ENCODE measurements at regions of chr6 and their contacts with region 1.

Region 1: GRCh38 chr6:30616811-30617564 is at the start of gene PPP1R10:
- DNase-seq: peak; percentile 98 to 100
- ATAC-seq: peak; percentile 96
- H3K4me3 ChIP-seq: peak within 1 kb of the TSS; percentile 97 to 100
- H3K27ac ChIP-seq: peak within 1 kb of the TSS; percentile 91 to 95
- H3K4me1 ChIP-seq: peaks cover 0 to 3% of the 10 kb centered on the region in 2 donors
- H3K27me3 ChIP-seq: peaks cover 0 to 2% of the 10 kb centered on the region in 2 donors
- total RNA-seq, gene PPP1R10: 69.9 to 83.8 TPM

Region 2: GRCh38 chr6:30020626-30021025 is 596.4 kb before region 1 on chr6:
- intact Hi-C with region 1: no loop called
- DNase-seq: no peak
- ATAC-seq: no peak
- H3K4me3 ChIP-seq: no peak overlapping the region
- H3K27ac ChIP-seq: no peak overlapping the region
- H3K4me1 ChIP-seq: no peaks in the 10 kb centered on the region
- H3K27me3 ChIP-seq: no peaks in the 10 kb centered on the region

Region 3: GRCh38 chr6:30544666-30545272 is 72.2 kb before region 1 on chr6:
- intact Hi-C with region 1: no loop called
- DNase-seq: no peak
- ATAC-seq: peak; percentile 77
- H3K4me3 ChIP-seq: no peak overlapping the region
- H3K27ac ChIP-seq: no peak overlapping the region
- H3K4me1 ChIP-seq: no peaks in the 10 kb centered on the region
- H3K27me3 ChIP-seq: no peaks in the 10 kb centered on the region

Region 4: DNA sequence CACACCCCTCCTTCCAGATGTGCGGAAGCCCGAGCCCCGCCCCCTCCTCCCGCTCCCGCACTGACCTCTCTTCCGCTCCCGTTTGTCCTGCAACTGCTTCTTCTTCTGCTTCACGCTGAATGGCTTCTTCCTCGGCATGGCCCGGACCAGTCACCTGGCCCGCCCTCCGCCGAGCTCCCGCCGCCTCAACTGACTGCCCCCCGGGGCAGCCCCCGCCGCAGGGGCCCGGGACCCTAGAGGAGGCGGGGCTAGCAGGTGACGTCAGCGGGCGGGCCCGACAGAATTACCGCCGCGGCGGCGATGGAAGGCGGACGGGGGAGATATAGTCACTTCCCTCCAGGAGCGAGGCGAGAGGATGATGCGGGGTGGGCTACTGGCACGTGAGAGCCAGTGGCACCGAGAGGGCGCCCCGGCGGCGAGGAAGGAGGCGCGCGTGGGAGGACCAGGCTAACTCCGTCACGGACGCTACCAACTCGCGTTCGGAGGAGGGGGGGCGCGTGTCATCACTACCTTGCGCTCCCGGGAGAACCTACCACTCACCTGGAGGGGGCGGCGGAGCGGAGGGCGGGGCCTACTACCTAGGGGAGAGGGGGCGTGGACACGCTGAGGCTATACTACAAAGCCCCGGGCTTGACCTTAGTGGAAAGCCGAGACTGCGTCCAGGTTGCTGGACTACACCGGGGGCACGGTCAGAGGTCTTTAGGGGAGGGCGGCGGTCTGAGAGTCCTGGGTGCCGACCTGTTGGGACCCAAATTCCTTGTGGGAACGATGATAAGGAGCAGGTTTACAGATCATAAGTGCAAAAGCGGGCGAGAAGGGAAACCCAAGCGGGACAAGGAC is 60.7 kb before region 1 on chr6 and contains the start of gene GNL1:
- intact Hi-C with region 1: loop called in 1 of 2 experiments (anchors 5 kb)
- DNase-seq: peak; percentile 96 to 97
- ATAC-seq: peak; percentile 93
- H3K4me3 ChIP-seq: peak within 1 kb of the TSS; percentile 67 to 69
- H3K27ac ChIP-seq: peak within 1 kb of the TSS; percentile 17 to 75
- H3K4me1 ChIP-seq: no peaks in the 10 kb centered on the region
- H3K27me3 ChIP-seq: no peaks in the 10 kb centered on the region
- total RNA-seq, gene GNL1: 73.7 to 76.9 TPM

Region 5: GRCh38 chr6:30571075-30571768 is 45.8 kb before region 1 on chr6 and contains the start of gene ABCF1:
- intact Hi-C with region 1: loop called (anchors 5 kb)
- DNase-seq: peak; percentile 99 to 100
- ATAC-seq: peak; percentile 100
- H3K4me3 ChIP-seq: peak within 1 kb of the TSS; percentile 82 to 93
- H3K27ac ChIP-seq: peak within 1 kb of the TSS in 1 of 2 donors; percentile 97
- H3K4me1 ChIP-seq: no peaks in the 10 kb centered on the region
- H3K27me3 ChIP-seq: no peaks in the 10 kb centered on the region
- total RNA-seq, gene ABCF1: 35.4 to 41.2 TPM

Region 6: GRCh38 chr6:30672445-30673253 is 55.7 kb after region 1 on chr6 and contains the start of gene DHX16:
- intact Hi-C with region 1: loop called in 1 of 2 experiments (anchors 5 kb)
- DNase-seq: peak; percentile 98
- ATAC-seq: peak; percentile 96
- H3K4me3 ChIP-seq: peak within 1 kb of the TSS; percentile 63 to 69
- H3K27ac ChIP-seq: peak within 1 kb of the TSS in 1 of 2 donors; percentile 2
- H3K4me1 ChIP-seq: no peaks in the 10 kb centered on the region
- H3K27me3 ChIP-seq: no peaks in the 10 kb centered on the region
- total RNA-seq, gene DHX16: 22.3 to 25.2 TPM

Region 7: GRCh38 chr6:30686908-30687658 is 70.1 kb after region 1 on chr6:
- intact Hi-C with region 1: loop called in 1 of 2 experiments (anchors 2 kb)
- DNase-seq: peak; percentile 98 to 99
- ATAC-seq: peak; percentile 84
- H3K4me3 ChIP-seq: peak overlapping the region; percentile 72 to 82
- H3K27ac ChIP-seq: peak overlapping the region; percentile 24 to 94
- H3K4me1 ChIP-seq: no peaks in the 10 kb centered on the region
- H3K27me3 ChIP-seq: no peaks in the 10 kb centered on the region

Region 8: DNA sequence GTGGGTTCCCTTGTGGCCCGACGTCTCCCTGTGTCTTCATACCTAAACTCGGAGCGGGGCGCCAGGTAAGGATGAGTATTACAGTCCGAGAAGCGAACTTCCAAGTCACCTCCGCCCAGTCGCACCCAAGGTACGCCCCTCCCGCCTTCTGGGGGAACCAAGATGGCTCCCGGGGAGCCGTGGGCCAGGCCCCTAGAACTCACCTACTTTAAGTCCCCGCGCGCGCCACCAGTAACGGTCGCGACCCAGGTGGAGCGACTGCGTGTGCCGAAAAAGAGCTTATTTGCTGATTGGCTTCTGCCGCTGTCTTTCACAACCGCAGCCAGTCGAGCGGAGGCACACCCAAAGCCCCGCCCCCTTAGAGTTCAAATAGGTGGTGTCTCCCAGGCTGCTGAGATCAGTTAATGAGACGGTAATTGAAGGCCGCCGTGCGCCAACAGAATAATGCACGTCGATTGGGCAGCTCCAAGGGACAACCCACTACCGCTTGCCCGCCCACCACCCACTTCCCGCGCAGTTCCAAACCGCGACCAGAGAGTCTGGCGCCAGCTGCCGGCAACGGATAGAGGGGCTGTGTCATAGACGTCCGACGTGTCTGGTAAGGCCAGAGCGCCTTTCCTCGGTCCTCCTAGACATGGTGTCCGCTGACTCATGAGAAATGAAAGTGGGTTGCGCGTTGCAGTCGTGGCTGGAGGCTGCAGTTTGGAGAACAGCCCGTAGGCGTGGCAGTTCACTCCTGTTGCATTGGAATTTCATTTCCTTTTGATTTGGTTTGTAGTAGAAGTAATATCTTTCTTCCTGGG is 100.3 kb after region 1 on chr6 and contains the start of gene MDC1:
- intact Hi-C with region 1: loop called in 1 of 2 experiments (anchors 2 kb)
- DNase-seq: peak; percentile 100
- ATAC-seq: peak; percentile 91
- H3K4me3 ChIP-seq: peak within 1 kb of the TSS; percentile 15 to 58
- H3K27ac ChIP-seq: peak within 1 kb of the TSS; percentile 51 to 68
- H3K4me1 ChIP-seq: no peaks in the 10 kb centered on the region
- H3K27me3 ChIP-seq: no peaks in the 10 kb centered on the region
- total RNA-seq, gene MDC1: 31.4 to 33.3 TPM

Region 9: DNA sequence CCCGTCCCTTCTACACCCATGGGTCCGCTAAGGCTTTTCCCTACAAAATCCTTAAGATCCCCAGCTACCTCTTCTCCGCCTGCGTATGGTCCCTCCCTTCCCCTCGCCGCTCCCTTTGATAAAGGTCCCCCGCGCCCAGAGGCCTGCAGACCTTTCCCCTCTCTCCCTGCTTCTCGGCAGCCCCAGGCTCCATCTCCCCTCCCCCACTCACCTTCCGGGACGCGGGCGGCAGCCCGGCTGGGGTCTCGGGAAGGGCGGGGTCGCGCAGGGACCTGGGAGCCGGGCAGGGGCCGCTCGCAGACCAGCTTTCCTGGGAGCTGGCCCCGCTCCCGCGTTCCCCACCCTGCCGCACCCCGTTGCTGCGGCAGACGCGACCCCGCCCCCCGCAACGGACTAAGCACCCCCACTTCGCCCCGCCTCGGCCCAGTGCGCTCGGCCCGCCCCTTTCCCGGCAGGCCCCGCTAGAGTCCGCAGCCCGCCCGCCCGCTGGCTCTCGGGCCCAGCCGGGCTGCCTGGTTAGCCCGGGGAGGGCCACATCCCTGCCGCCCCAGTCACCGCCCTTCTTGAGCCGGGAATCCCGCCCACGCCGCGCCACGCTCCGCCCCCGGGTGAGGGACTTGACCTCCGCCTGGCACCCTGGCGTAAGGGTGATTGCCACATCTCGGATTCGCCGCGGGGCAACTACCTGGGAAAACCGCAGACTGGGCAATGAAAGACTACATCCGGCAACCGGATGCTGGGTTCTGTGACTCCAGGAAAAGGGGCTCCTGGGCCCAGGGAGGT is 125.5 kb after region 1 on chr6 and contains the start of gene FLOT1:
- intact Hi-C with region 1: loop called in 1 of 2 experiments (anchors 5 kb)
- DNase-seq: peak; percentile 99 to 100
- ATAC-seq: peak; percentile 95
- H3K4me3 ChIP-seq: peak within 1 kb of the TSS; percentile 55 to 84
- H3K27ac ChIP-seq: peak within 1 kb of the TSS; percentile 71 to 94
- H3K4me1 ChIP-seq: no peaks in the 10 kb centered on the region
- H3K27me3 ChIP-seq: peaks cover 0 to 7% of the 10 kb centered on the region in 2 donors
- total RNA-seq, gene FLOT1: 172 to 222 TPM

Measured in aorta (tissue), 5 donors.